MCF 10A (cell line): ENCODE measurements at regions of chr4 and their contacts with region 1.

Region 1: DNA sequence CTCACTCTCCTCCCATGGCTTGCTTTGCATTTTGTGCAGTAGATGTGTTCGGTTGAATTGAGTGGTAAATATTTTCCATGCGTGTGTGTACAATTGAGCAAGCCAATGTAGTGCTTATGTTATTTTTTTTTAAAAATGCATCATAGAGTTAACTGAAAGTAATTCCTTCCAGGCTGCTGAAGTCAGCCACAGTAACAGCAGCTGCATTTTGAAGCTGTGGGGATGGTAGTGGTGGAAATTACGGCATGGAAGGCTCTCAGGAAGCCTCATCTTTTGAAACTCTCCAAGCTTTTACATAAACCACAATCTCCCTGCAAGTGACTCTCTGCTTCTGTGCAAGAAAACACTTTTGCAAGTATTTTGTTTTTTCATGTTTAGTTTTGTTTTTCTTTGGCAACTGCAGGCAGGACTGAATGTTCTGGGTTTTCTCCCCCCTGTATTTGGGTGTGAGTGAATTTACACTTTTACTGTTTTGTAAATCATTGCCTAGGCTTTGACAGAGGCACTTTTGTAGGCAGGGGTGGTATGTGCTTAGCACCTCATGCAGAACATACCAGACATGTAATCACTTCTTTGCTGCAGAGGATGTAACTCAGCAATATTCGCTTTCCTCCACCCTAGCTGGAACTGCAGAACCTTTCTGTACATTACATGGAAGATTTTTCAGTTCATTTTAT is 56.2 kb downstream of the LRRC66 start:
- DNase-seq: no peak
- H3K4me3 Mint-ChIP-seq: no peak overlapping the region
- H3K27ac Mint-ChIP-seq: peak overlapping the region; percentile 25
- H3K4me1 Mint-ChIP-seq: peaks cover 48% of the 10 kb centered on the region
- H3K27me3 Mint-ChIP-seq: no peaks in the 10 kb centered on the region
- CTCF ChIP-seq: no peak

Region 2: DNA sequence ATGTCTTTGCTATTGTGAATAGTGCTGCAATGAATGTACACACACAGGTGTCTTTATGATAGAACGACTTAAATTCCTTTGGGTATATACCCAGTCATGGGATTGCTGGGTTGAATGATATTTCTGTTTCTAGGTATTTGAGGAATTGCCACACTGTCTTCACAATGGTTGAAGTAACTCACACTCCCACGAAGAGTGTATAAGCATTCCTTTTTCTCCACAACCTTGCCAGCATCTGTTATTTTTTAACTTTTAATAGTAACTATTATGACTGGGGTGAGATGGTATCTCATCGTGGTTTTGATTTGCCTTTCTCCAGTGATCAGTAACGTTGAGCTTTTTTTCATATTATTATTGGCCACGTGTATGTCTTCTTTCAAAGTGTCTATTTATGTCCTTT is 138.6 kb before region 1 on chr4:
- CTCF ChIA-PET with region 1: no interaction called
- POLR2A ChIA-PET with region 1: no interaction called
- intact Hi-C with region 1: no loop called
- DNase-seq: no peak
- H3K4me3 Mint-ChIP-seq: no peak overlapping the region
- H3K27ac Mint-ChIP-seq: no peak overlapping the region
- H3K4me1 Mint-ChIP-seq: no peaks in the 10 kb centered on the region
- H3K27me3 Mint-ChIP-seq: no peaks in the 10 kb centered on the region
- CTCF ChIP-seq: no peak

Region 3: GRCh38 chr4:51878431-51878830 is 85.5 kb before region 1 on chr4:
- CTCF ChIA-PET with region 1: no interaction called
- POLR2A ChIA-PET with region 1: no interaction called
- intact Hi-C with region 1: no loop called
- DNase-seq: no peak
- H3K4me3 Mint-ChIP-seq: no peak overlapping the region
- H3K27ac Mint-ChIP-seq: peak overlapping the region; percentile 2
- H3K4me1 Mint-ChIP-seq: peaks cover 8% of the 10 kb centered on the region
- H3K27me3 Mint-ChIP-seq: no peaks in the 10 kb centered on the region
- CTCF ChIP-seq: no peak

Region 4: GRCh38 chr4:51918251-51918650 is 45.7 kb before region 1 on chr4:
- CTCF ChIA-PET with region 1: no interaction called
- POLR2A ChIA-PET with region 1: interaction called, 3 read pairs
- intact Hi-C with region 1: loop called (anchors 10 kb)
- DNase-seq: peak; percentile 14
- H3K4me3 Mint-ChIP-seq: no peak overlapping the region
- H3K27ac Mint-ChIP-seq: no peak overlapping the region
- H3K4me1 Mint-ChIP-seq: peaks cover 6% of the 10 kb centered on the region
- H3K27me3 Mint-ChIP-seq: no peaks in the 10 kb centered on the region
- CTCF ChIP-seq: no peak

Region 5: DNA sequence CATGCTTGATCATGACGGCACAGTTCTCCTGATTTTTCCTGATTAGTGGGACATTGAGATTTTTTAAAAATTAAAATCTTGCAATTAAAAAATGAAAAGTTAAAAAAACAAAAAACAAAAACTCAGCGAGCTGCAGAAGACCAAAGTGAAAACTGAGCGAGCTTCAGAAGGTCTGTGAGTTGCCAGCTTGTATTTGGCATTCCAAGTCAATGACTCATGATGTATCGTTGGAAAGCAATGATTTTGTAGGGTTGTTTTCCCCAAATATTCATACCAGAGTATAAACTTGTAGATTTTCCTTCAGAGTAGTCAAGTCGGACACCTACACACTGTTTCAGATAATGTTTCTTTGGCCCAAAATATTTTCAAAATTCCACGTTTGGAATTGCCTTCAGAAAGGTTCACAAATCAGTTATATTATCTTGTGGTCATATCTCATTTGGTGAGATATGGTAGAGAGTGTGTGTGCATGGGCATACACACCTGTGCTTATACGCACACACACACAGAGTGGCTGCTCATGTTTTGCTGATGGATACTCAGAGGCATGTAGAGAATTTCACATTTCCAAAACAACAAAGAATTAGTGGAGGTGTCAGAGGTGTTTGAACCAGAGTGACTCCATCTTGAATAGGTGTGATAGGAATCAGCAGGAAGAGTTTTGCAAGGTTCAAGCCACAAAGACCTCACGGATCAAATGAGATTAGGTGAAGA is 20.6 kb before region 1 on chr4:
- CTCF ChIA-PET with region 1: interaction called, 4 read pairs
- POLR2A ChIA-PET with region 1: interaction called, 11 read pairs
- intact Hi-C with region 1: no loop called
- DNase-seq: peak; percentile 58
- H3K4me3 Mint-ChIP-seq: no peak overlapping the region
- H3K27ac Mint-ChIP-seq: peak overlapping the region; percentile 74
- H3K4me1 Mint-ChIP-seq: peaks cover 12% of the 10 kb centered on the region
- H3K27me3 Mint-ChIP-seq: no peaks in the 10 kb centered on the region
- CTCF ChIP-seq: no peak